Endothelial cell of umbilical vein (primary cell): ENCODE measurements at regions of chr6 and their contacts with region 1.

Region 1: GRCh38 chr6:106097411-106098231 is 11.5 kb downstream of the PRDM1 start:
- DNase-seq: peak; percentile 65
- H3K4me3 ChIP-seq: peak overlapping the region; percentile 35 to 69 (median 63)
- H3K27ac ChIP-seq: peak overlapping the region; percentile 2
- H3K4me1 ChIP-seq: peaks cover 17% of the 10 kb centered on the region
- H3K27me3 ChIP-seq: peaks cover 10 to 16% of the 10 kb centered on the region in 2 experiments
- CTCF ChIP-seq: no peak
- POLR2A ChIP-seq: peak; percentile 18

Region 2: DNA sequence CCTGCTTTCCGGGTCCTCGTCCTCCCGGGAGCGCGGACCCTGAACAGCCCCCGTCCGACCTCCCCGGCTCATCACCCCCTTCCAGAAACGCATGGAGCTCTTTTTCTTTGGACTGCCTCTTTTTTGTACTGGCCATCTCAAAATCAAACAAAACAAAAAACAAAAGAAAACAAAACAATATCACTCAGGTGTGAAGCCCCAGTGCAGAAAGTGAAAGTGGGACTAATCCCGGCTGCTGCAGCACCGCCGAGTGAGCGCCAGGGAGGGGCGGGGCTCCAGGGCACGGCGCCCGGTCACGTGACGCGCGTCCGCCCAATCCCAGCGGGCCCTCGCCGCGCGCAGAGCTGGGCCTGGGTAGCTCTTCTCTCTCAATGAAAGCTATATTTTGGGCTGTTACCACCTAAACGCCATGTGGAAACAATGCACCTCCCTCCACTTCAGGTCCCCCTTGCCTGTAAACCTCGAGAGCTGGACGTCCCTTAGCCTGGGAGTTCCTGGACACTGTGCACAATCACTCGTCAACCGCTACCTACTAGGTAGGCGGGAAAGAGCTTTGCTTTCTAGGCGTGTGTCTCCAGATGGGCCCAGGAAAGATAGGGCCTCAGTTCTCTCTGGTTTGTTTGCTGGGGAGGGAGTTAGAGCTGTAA is 105.2 kb before region 1 on chr6:
- CTCF ChIA-PET with region 1: no interaction called
- POLR2A ChIA-PET with region 1: no interaction called
- dilution Hi-C with region 1: no loop called
- intact Hi-C with region 1: loop called (anchors 1 kb)
- DNase-seq: peak; percentile 76
- H3K4me3 ChIP-seq: peak overlapping the region; percentile 55 to 74 (median 72)
- H3K27ac ChIP-seq: no peak overlapping the region
- H3K4me1 ChIP-seq: peaks cover 22% of the 10 kb centered on the region
- H3K27me3 ChIP-seq: peaks cover 81 to 93% of the 10 kb centered on the region in 2 experiments
- CTCF ChIP-seq: no peak
- POLR2A ChIP-seq: no peak

Region 3: GRCh38 chr6:106085984-106086813 is 11.4 kb before region 1 on chr6 and contains the start of gene PRDM1:
- CTCF ChIA-PET with region 1: interaction called, 5 read pairs
- POLR2A ChIA-PET with region 1: no interaction called
- dilution Hi-C with region 1: no loop called
- intact Hi-C with region 1: loop called (anchors 1 kb)
- DNase-seq: peak; percentile 38
- H3K4me3 ChIP-seq: peak within 1 kb of the TSS; percentile 30 to 67 (median 64)
- H3K27ac ChIP-seq: no peak within 1 kb of the TSS
- H3K4me1 ChIP-seq: peaks cover 19% of the 10 kb centered on the region
- H3K27me3 ChIP-seq: peaks cover 8 to 24% of the 10 kb centered on the region in 2 experiments
- CTCF ChIP-seq: no peak
- POLR2A ChIP-seq: no peak
- total RNA-seq, gene PRDM1: 2.7 and 4.8 TPM in 2 replicates

Region 4: DNA sequence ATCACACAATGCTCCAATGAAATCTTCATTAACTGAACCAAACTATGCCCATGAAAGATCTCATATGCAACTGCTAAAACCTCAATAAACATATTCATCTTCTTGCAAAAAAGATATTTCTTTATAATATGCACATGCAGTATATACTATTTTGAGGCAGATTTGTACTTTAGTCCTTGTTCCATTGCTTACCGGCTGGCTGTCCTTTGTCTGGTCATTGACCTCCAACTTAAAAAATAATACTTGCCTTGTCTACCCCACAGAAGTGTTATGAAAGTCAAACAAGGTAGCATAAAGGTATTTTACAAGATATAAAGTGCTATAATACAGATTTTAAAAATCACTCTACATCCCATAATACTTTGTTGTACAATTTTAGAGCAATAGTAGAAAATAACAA is 139.7 kb after region 1 on chr6:
- CTCF ChIA-PET with region 1: no interaction called
- POLR2A ChIA-PET with region 1: no interaction called
- dilution Hi-C with region 1: no loop called
- intact Hi-C with region 1: no loop called
- DNase-seq: no peak
- H3K4me3 ChIP-seq: no peak overlapping the region
- H3K27ac ChIP-seq: no peak overlapping the region
- H3K4me1 ChIP-seq: no peaks in the 10 kb centered on the region
- H3K27me3 ChIP-seq: no peaks in the 10 kb centered on the region
- CTCF ChIP-seq: no peak
- POLR2A ChIP-seq: no peak